ENCODE measurements at regions of chr9 and their contacts with region 1.

Region 1: DNA sequence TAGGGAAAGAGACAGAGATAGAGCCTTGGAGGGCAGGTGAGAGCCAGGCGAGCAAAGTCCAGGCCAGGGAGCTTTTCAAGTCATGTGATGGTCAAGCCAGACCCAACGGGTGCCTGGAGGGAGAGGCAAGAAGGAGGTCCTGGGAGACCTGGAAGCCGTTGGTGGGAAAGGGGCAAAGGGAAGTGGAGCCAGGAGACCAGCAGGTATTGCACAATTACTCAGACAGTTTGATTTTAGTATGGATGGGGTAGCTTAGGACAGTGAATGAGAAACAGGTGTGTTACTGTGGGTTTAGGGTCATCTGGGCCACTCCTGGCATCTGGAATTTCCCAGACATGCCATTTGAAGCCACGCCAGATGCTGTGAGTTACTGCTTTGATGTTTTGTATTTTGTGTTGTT is 5.1 kb downstream of the SECISBP2 start:
- DNase-seq: no peak
- ATAC-seq: no peak

Region 2: DNA sequence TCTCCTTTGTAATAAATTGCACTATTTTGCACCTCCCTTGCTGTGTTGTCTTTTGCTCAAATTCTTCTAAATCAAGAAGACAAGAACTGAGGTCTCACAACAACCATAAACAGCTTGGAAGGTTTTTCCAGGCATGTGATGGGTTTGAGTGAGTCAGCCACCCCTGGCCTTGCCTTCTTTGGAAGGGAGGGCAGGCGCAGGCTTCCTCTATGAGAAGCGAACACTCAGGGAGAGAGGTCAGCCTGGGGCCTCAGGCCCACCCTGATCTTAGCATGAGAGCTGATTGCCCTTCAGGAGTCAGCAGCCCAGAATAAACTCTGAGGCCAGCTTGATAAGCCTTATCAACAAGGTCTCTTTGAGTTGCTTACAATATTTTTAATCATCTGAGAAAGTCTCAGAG is 300.5 kb before region 1 on chr9:
- intact Hi-C with region 1: no loop called
- DNase-seq: peak; percentile 50
- ATAC-seq: peak; percentile 77

Region 3: GRCh38 chr9:89532478-89532877 is 209.1 kb after region 1 on chr9:
- intact Hi-C with region 1: no loop called
- DNase-seq: no peak
- ATAC-seq: no peak

Region 4: GRCh38 chr9:89549031-89549644 is 225.7 kb after region 1 on chr9:
- intact Hi-C with region 1: loop called (anchors 10 kb)
- DNase-seq: peak; percentile 87
- ATAC-seq: peak; percentile 93